Endothelial cell of umbilical vein (primary cell): ENCODE measurements at regions of chr18 and their contacts with region 1.

Region 1: DNA sequence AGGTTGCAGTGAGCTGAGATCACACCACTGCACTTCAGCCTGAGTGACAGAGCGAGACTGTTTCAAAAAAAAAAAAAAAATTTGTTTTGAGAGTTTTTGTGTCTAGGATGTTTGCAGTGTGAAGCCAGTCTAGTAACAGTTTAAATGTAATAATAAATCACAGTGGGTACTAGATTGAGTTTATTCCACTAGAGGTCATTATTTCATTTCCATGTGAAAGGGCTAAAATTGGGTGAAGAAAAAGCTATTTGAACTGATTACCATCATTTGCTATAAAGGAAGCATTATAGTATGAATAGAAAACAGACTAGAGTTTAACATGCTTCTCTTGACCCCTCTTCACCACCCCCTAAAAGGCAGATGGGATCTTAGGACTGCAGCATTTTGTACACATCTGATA is 20.3 kb downstream of the SNRPD1 start:
- DNase-seq: peak; percentile 23
- H3K4me3 ChIP-seq: no peak overlapping the region
- H3K27ac ChIP-seq: no peak overlapping the region
- H3K4me1 ChIP-seq: peaks cover 7% of the 10 kb centered on the region
- H3K27me3 ChIP-seq: no peaks in the 10 kb centered on the region
- CTCF ChIP-seq: no peak
- POLR2A ChIP-seq: no peak

Region 2: DNA sequence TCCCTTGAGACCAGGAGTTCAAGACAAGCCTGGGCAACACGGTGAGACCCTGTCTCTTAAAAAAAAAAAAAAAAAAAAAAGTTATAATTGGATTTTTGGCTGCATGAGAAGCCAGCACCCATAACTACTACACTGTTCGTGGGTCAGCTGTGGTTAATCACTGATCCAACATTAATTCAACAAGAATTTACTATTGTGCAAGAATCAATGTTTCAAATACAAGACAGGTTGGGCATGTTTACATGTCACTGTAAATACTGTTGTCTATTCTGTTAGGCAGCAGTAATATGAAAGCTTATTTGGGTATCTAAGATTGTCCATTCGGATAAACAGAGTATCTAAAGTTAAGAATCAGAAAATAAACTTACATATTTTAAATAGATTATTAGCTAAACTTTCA is 94.2 kb before region 1 on chr18:
- CTCF ChIA-PET with region 1: no interaction called
- POLR2A ChIA-PET with region 1: no interaction called
- dilution Hi-C with region 1: no loop called
- intact Hi-C with region 1: no loop called
- DNase-seq: no peak
- H3K4me3 ChIP-seq: no peak overlapping the region
- H3K27ac ChIP-seq: no peak overlapping the region
- H3K4me1 ChIP-seq: no peaks in the 10 kb centered on the region
- H3K27me3 ChIP-seq: no peaks in the 10 kb centered on the region
- CTCF ChIP-seq: no peak
- POLR2A ChIP-seq: no peak

Region 3: DNA sequence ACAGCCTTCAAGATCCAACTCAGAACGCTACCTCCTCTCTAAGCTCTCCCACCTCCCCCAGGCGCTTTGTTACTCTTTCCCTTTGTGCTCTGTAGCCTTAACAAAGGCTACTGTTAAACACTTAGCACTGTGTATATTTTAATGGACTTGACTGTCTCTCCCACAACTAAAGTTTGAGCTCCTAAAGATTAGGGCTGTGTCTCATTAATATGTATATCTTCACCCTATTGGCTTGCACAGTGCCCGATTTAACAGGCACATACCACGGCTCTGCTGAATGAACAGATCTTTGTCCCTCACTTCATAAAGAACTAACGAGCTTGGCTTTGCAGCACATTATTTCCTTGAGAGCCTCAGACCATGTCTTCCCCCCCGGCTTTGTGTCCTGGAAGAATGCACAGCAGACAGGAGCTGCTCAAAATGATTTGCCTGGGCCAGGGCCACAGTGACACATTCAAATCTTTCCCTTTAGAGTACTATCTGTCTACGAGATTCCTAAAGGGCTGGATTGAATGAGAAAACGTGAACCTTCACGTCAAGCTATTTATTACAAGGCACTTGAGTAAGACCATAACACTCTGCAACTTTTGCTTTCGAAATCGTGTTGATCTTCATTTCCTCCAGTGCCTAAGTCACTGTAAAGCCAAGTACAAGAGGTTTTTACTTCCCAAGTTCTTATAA is 50.1 kb after region 1 on chr18:
- CTCF ChIA-PET with region 1: interaction called, 11 read pairs
- POLR2A ChIA-PET with region 1: no interaction called
- dilution Hi-C with region 1: no loop called
- intact Hi-C with region 1: no loop called
- DNase-seq: peak; percentile 74
- H3K4me3 ChIP-seq: peak overlapping the region in 1 of 3 experiments; percentile 40
- H3K27ac ChIP-seq: peak overlapping the region; percentile 48
- H3K4me1 ChIP-seq: peaks cover 12% of the 10 kb centered on the region
- H3K27me3 ChIP-seq: no peaks in the 10 kb centered on the region
- CTCF ChIP-seq: no peak
- POLR2A ChIP-seq: no peak

Region 4: DNA sequence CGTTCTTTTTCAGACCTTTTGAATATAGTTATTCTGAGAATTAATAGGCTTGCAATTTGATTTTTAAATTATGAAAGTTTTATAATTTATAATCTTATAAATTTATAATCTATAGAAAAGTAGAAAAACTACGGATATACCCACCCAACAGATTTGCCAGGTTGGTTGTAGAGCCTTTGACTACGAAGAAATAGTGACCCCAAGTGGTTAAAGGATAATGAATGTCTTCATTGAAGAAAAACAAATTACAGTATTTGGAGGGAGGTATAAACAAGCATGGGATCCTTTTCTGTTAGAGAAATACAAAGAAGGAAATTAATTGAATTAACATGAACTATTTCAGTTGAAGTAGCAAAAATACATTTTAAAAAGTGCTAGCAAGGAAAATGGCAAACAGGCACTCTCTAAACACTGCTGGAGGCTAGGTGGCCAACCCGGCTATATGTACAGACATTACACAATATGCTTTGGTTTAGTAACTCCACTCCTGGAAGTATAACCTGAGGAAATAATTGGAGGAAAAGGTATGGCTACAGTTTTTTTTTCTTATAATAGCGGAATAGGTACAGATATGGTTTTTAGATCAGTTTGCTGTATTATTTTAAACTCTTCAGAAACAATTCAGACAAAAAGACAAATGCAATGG is 219.1 kb after region 1 on chr18:
- CTCF ChIA-PET with region 1: interaction called, 17 read pairs
- POLR2A ChIA-PET with region 1: no interaction called
- dilution Hi-C with region 1: no loop called
- intact Hi-C with region 1: loop called (anchors 2 kb)
- DNase-seq: peak; percentile 32
- H3K4me3 ChIP-seq: no peak overlapping the region
- H3K27ac ChIP-seq: no peak overlapping the region
- H3K4me1 ChIP-seq: no peaks in the 10 kb centered on the region
- H3K27me3 ChIP-seq: no peaks in the 10 kb centered on the region
- CTCF ChIP-seq: peak in 1 of 2 donors; percentile 6
- POLR2A ChIP-seq: no peak